ENCODE measurements at regions of chr11 and their contacts with region 1.

Region 1: GRCh38 chr11:70314730-70315129 is 44.2 kb downstream of the PPFIA1 start:
- H3K4me3 Mint-ChIP-seq: peak overlapping the region; percentile 51
- H3K27ac Mint-ChIP-seq: peak overlapping the region; percentile 56
- H3K4me1 Mint-ChIP-seq: peaks cover 52% of the 10 kb centered on the region
- H3K27me3 Mint-ChIP-seq: no peaks in the 10 kb centered on the region

Region 2: DNA sequence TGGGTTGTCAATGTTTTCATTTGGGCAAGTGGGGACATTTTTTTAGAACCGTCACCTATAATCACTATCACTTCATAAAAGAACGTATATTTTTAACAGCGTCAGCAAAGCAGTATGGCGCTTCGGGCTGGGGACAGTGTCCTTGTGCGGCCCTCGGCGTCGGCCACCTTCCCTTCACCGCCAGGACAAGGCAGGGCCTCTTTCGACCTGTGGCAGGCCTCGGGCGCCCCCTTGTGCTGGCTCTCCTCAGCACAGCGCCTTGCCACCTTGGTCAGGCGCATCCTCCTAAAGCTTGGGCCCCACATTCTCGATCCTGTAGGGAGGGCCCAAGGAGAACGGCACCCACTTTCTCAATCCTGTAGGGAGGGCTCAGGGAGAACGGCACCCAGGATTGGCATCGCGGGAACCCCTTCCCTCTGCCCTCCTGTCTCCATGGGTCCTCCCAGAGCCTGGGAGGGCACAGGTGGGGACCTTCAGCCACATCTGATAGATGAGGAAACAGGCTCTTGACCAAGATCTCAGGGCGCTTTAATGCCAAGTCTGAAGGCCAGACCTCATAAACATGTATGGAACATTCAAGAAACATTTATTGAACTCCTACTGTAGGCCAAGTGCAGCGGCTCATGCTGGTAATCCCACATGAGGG is 123.1 kb before region 1 on chr11:
- intact Hi-C with region 1: no loop called
- H3K4me3 Mint-ChIP-seq: no peak overlapping the region
- H3K27ac Mint-ChIP-seq: no peak overlapping the region
- H3K4me1 Mint-ChIP-seq: peaks cover 4% of the 10 kb centered on the region
- H3K27me3 Mint-ChIP-seq: peaks cover 13% of the 10 kb centered on the region

Region 3: DNA sequence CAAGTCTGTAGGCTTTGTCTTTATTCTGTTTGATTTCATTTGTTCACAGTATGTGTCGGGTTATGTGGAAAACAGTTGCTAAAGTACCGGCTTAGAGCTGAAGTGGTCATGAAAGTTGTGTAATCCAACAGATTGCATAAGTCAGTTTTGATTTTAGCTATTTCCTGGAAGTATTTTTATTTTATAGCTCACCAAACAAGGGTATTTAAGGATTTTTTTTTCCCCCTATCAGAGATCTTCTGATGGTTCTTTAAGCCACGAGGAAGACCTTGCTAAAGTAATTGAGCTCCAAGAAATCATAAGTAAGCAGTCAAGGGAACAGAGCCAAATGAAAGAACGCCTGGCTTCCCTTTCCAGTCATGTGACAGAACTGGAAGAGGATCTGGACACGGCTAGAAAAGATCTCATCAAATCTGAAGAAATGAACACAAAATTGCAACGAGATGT is 11.7 kb after region 1 on chr11:
- intact Hi-C with region 1: loop called (anchors 1 kb)
- H3K4me3 Mint-ChIP-seq: no peak overlapping the region
- H3K27ac Mint-ChIP-seq: peak overlapping the region; percentile 83
- H3K4me1 Mint-ChIP-seq: peaks cover 55% of the 10 kb centered on the region
- H3K27me3 Mint-ChIP-seq: no peaks in the 10 kb centered on the region